PC-3 (cell line): ENCODE measurements at regions of chr9 and their contacts with region 1.

Region 1: DNA sequence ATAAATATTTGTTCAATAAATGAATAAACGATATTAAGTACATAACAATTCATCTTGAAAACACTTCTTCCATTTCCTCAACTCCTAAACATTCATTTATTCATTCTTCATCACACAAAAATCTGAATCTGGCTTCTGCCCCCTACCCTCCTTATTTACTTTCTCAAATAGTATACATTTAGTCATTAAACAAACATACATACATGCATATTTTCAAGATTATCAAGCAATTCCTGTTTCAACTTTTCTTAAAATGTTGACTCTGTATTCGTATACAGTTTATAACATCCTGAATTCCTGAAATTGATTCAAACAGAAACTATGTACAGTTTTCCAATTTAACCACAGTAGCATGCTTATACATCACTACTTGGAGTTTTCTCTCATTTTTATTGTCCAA is 129.0 kb downstream of the MUSK start:
- DNase-seq: peak; percentile 91
- ATAC-seq: peak; percentile 67
- H3K4me3 ChIP-seq: no peak overlapping the region; the same call in 1 of the 2 replicates
- H3K27ac ChIP-seq: peak overlapping the region; percentile 99
- H3K4me1 ChIP-seq: peaks cover 43% of the 10 kb centered on the region
- H3K27me3 ChIP-seq: no peaks in the 10 kb centered on the region
- CTCF ChIP-seq: no peak

Region 2: GRCh38 chr9:110650991-110651411 is 146.6 kb before region 1 on chr9:
- CTCF ChIA-PET with region 1: no interaction called
- POLR2A ChIA-PET with region 1: no interaction called
- intact Hi-C with region 1: no loop called
- DNase-seq: peak; percentile 77
- ATAC-seq: peak; percentile 84
- H3K4me3 ChIP-seq: no peak overlapping the region
- H3K27ac ChIP-seq: peak overlapping the region; percentile 89
- H3K4me1 ChIP-seq: peaks cover 26% of the 10 kb centered on the region
- H3K27me3 ChIP-seq: no peaks in the 10 kb centered on the region
- CTCF ChIP-seq: no peak

Region 3: GRCh38 chr9:111037381-111038305 is 240.0 kb after region 1 on chr9:
- CTCF ChIA-PET with region 1: no interaction called
- POLR2A ChIA-PET with region 1: no interaction called
- intact Hi-C with region 1: loop called (anchors 5 kb)
- DNase-seq: peak; percentile 42
- ATAC-seq: peak; percentile 39
- H3K4me3 ChIP-seq: peak overlapping the region; percentile 83
- H3K27ac ChIP-seq: peak overlapping the region; percentile 66
- H3K4me1 ChIP-seq: peaks cover 37% of the 10 kb centered on the region
- H3K27me3 ChIP-seq: no peaks in the 10 kb centered on the region
- CTCF ChIP-seq: no peak